ENCODE measurements at regions of chr16 and their contacts with region 1.

Region 1: GRCh38 chr16:22898874-22899348 is 84.9 kb downstream of the HS3ST2 start:
- DNase-seq: peak; percentile 66
- H3K4me3 ChIP-seq: no peak overlapping the region
- H3K27ac ChIP-seq: no peak overlapping the region
- H3K4me1 ChIP-seq: no peaks in the 10 kb centered on the region
- H3K27me3 ChIP-seq: no peaks in the 10 kb centered on the region
- CTCF ChIP-seq: peak; percentile 75

Region 2: DNA sequence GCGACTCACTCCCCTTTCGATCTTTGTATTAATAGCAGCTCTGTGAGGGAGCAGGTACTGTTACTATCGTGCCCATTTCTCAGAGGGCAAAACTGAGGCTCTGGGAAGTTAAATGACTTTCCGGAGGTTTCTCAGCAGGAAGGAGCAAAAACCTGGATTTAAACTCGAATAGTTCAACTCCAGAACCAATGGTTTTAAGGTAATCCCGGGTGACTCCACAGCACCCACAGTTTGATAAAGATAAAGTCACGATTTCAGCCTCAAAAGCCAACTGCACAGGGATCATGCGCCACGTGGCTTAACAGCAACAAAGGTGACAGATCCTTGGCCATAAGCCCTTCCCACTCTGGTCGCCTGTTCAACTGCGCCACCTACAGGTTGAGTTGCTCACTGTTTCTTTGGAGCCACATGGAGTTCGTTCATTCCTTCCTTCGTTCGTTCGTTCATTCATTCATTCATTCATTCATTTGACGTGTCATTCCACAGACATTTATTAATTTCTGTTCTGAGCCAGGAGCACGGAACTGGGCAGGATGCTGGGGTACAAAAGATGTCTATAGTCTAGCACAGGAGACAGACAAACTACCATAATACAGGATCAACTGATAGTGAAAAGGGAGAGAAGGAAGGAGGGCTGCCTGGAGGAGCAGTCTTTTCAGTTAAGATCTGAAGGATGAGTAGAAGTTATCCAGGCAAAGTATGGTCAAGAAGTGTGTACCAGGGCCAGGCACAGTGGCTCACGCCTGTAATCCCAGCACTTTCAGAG is 49.9 kb after region 1 on chr16:
- intact Hi-C with region 1: loop called (anchors 5 kb)
- DNase-seq: peak; percentile 78
- H3K4me3 ChIP-seq: no peak overlapping the region
- H3K27ac ChIP-seq: no peak overlapping the region
- H3K4me1 ChIP-seq: peaks cover 4% of the 10 kb centered on the region
- H3K27me3 ChIP-seq: peaks cover 8% of the 10 kb centered on the region
- CTCF ChIP-seq: peak; percentile 62

Region 3: GRCh38 chr16:23058576-23058975 is 159.7 kb after region 1 on chr16:
- intact Hi-C with region 1: loop called (anchors 5 kb)
- DNase-seq: no peak
- H3K4me3 ChIP-seq: no peak overlapping the region
- H3K27ac ChIP-seq: no peak overlapping the region
- H3K4me1 ChIP-seq: no peaks in the 10 kb centered on the region
- H3K27me3 ChIP-seq: no peaks in the 10 kb centered on the region
- CTCF ChIP-seq: no peak

Region 4: GRCh38 chr16:23160574-23160973 is 261.7 kb after region 1 on chr16:
- intact Hi-C with region 1: loop called (anchors 10 kb)
- DNase-seq: no peak
- H3K4me3 ChIP-seq: no peak overlapping the region
- H3K27ac ChIP-seq: no peak overlapping the region
- H3K4me1 ChIP-seq: no peaks in the 10 kb centered on the region
- H3K27me3 ChIP-seq: no peaks in the 10 kb centered on the region
- CTCF ChIP-seq: no peak

Region 5: DNA sequence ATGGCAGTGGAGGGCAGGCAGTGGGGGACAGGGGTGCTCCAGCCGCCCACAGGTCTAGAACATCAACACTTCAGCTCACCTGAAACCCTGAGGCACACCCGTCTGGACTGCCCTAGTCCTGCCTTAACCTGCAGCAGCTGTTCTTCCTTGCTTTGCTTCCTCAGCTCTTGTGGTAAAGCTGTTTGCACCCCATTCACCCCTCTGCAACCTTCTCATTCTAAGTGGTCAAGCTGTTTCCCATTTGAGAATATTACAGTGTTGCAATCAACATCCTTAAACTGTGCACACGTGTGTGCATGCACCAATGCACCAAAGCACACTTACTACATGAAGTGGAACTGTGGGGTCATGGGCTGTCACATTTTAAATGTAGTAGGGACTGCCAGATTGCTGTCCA is 435.5 kb after region 1 on chr16:
- intact Hi-C with region 1: no loop called
- DNase-seq: no peak
- H3K4me3 ChIP-seq: no peak overlapping the region
- H3K27ac ChIP-seq: no peak overlapping the region
- H3K4me1 ChIP-seq: no peaks in the 10 kb centered on the region
- H3K27me3 ChIP-seq: no peaks in the 10 kb centered on the region
- CTCF ChIP-seq: no peak

Measured in colonic mucosa (tissue), 4 donors.